OCI-LY7 (cell line): ENCODE measurements at regions of chr14 and their contacts with region 1.

Region 1: GRCh38 chr14:60151715-60152114 is 13.5 kb downstream of the DHRS7 start:
- DNase-seq: peak; percentile 78
- H3K4me3 ChIP-seq: peak overlapping the region; percentile 22
- H3K27ac ChIP-seq: peak overlapping the region; percentile 55
- H3K4me1 ChIP-seq: peaks cover 16% of the 10 kb centered on the region
- CTCF ChIP-seq: no peak

Region 2: GRCh38 chr14:59939828-59940227 is 211.9 kb before region 1 on chr14:
- CTCF ChIA-PET with region 1: no interaction called
- POLR2A ChIA-PET with region 1: no interaction called
- intact Hi-C with region 1: no loop called
- DNase-seq: no peak
- H3K4me3 ChIP-seq: no peak overlapping the region
- H3K27ac ChIP-seq: no peak overlapping the region
- H3K4me1 ChIP-seq: no peaks in the 10 kb centered on the region
- CTCF ChIP-seq: no peak

Region 3: GRCh38 chr14:60106339-60106738 is 45.4 kb before region 1 on chr14:
- CTCF ChIA-PET with region 1: no interaction called
- POLR2A ChIA-PET with region 1: interaction called, 3 read pairs
- intact Hi-C with region 1: loop called (anchors 5 kb)
- DNase-seq: no peak
- H3K4me3 ChIP-seq: no peak overlapping the region
- H3K27ac ChIP-seq: no peak overlapping the region
- H3K4me1 ChIP-seq: no peaks in the 10 kb centered on the region
- CTCF ChIP-seq: no peak